ENCODE measurements at regions of chr6 and their contacts with region 1.

Region 1: DNA sequence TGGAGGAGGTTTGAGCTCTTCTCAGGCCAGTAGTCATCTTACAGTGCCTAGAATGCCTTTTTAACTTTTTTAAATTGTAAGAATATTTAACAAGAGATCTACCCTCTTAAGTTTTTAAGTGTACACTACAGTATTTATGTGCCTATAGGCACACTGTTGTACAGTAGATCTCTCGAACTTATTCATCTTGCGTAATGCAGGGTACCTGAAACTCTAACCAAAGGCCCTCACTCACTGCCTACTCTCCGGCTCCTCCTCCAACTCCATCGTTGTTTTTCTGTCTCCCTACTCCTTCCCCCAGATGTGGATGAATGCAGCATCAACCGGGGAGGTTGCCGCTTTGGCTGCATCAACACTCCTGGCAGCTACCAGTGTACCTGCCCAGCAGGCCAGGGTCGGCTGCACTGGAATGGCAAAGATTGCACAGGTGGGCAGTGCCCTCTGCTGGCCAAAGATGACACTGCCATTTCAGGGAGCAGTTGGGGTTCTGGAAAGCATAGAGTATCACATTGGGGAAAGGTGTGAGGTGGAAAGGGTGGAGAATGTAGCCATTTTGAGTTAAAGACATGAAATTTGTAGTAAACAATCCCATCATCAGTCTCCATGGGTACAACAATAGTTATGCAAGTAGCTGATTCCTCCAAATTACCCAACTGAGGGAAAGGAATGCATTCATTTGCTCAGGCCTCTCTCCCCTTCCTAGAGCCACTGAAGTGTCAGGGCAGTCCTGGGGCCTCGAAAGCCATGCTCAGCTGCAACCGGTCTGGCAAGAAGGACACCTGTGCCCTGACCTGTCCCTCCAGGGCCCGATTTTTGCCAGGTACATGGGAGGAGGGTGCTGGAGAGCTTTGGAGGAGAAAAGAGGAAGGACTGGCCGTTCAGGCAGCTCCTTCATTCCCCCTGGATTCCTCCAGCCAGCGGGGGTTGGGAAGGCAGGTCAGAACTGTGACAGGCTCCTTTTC is 18.4 kb upstream of the ZNF76 start:
- DNase-seq: peak; percentile 79
- H3K4me3 ChIP-seq: no peak overlapping the region
- H3K27ac ChIP-seq: no peak overlapping the region
- H3K4me1 ChIP-seq: no peaks in the 10 kb centered on the region
- H3K27me3 ChIP-seq: no peaks in the 10 kb centered on the region
- CTCF ChIP-seq: peak; percentile 95

Region 2: DNA sequence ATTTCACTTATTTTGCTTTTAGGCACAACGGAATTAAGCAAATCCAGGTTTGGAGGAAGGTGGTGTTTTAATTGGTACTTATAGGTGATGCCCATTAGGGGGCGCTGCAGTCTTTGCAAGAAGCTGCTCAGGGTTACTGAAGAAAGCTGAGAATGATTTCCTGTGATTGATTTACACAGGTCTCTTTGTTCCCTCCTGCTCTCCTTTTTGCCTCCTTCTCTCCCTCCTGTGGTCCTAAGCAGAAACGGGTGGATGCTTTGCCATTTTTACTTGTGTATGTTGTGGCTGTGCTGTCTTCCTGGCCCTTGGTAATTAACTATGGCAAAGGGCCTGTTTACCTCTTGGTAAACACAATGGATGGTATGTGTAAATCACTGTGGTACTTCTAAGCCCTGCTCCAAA is 254.3 kb before region 1 on chr6:
- intact Hi-C with region 1: loop called (anchors 10 kb)
- DNase-seq: peak; percentile 71
- H3K4me3 ChIP-seq: no peak overlapping the region
- H3K27ac ChIP-seq: no peak overlapping the region
- H3K4me1 ChIP-seq: no peaks in the 10 kb centered on the region
- H3K27me3 ChIP-seq: no peaks in the 10 kb centered on the region
- CTCF ChIP-seq: peak; percentile 67

Region 3: GRCh38 chr6:35146453-35146852 is 94.7 kb before region 1 on chr6:
- intact Hi-C with region 1: loop called (anchors 1 kb)
- DNase-seq: peak; percentile 60
- H3K4me3 ChIP-seq: no peak overlapping the region
- H3K27ac ChIP-seq: no peak overlapping the region
- H3K4me1 ChIP-seq: no peaks in the 10 kb centered on the region
- H3K27me3 ChIP-seq: no peaks in the 10 kb centered on the region
- CTCF ChIP-seq: peak; percentile 48

Region 4: GRCh38 chr6:35411066-35411465 is 169.9 kb after region 1 on chr6:
- intact Hi-C with region 1: no loop called
- DNase-seq: no peak
- H3K4me3 ChIP-seq: no peak overlapping the region
- H3K27ac ChIP-seq: no peak overlapping the region
- H3K4me1 ChIP-seq: peaks cover 3% of the 10 kb centered on the region
- H3K27me3 ChIP-seq: no peaks in the 10 kb centered on the region
- CTCF ChIP-seq: no peak

Measured in colonic mucosa (tissue), 4 donors.